B cell (primary cell): ENCODE measurements at regions of chr15 and their contacts with region 1.

Region 1: GRCh38 chr15:71800835-71801745 is 9.3 kb upstream of the NR2E3 start:
- DNase-seq: no peak
- ATAC-seq: no peak
- H3K4me3 ChIP-seq: no peak overlapping the region
- H3K4me3 Mint-ChIP-seq: no peak overlapping the region
- H3K27ac ChIP-seq: no peak overlapping the region
- H3K27ac Mint-ChIP-seq: no peak overlapping the region
- H3K4me1 ChIP-seq: no peaks in the 10 kb centered on the region
- H3K4me1 Mint-ChIP-seq: peaks cover 2% of the 10 kb centered on the region
- H3K27me3 ChIP-seq: peaks cover 0 to 6% (median 3%) of the 10 kb centered on the region in 4 experiments
- H3K27me3 Mint-ChIP-seq: peaks cover 19% of the 10 kb centered on the region
- CTCF ChIP-seq: peak; percentile 46

Region 2: GRCh38 chr15:71780115-71780976 is 20.7 kb before region 1 on chr15:
- CTCF ChIA-PET with region 1: interaction called, 19 read pairs
- POLR2A ChIA-PET with region 1: no interaction called
- intact Hi-C with region 1: no loop called
- DNase-seq: peak; percentile 59
- ATAC-seq: peak; percentile 51
- H3K4me3 ChIP-seq: no peak overlapping the region
- H3K4me3 Mint-ChIP-seq: no peak overlapping the region
- H3K27ac ChIP-seq: no peak overlapping the region
- H3K27ac Mint-ChIP-seq: no peak overlapping the region
- H3K4me1 ChIP-seq: no peaks in the 10 kb centered on the region
- H3K4me1 Mint-ChIP-seq: peaks cover 3% of the 10 kb centered on the region
- H3K27me3 ChIP-seq: no peaks in the 10 kb centered on the region
- H3K27me3 Mint-ChIP-seq: peaks cover 15% of the 10 kb centered on the region
- CTCF ChIP-seq: peak; percentile 93